GM23248 (cell line): ENCODE measurements at regions of chr2 and their contacts with region 1.

Region 1: DNA sequence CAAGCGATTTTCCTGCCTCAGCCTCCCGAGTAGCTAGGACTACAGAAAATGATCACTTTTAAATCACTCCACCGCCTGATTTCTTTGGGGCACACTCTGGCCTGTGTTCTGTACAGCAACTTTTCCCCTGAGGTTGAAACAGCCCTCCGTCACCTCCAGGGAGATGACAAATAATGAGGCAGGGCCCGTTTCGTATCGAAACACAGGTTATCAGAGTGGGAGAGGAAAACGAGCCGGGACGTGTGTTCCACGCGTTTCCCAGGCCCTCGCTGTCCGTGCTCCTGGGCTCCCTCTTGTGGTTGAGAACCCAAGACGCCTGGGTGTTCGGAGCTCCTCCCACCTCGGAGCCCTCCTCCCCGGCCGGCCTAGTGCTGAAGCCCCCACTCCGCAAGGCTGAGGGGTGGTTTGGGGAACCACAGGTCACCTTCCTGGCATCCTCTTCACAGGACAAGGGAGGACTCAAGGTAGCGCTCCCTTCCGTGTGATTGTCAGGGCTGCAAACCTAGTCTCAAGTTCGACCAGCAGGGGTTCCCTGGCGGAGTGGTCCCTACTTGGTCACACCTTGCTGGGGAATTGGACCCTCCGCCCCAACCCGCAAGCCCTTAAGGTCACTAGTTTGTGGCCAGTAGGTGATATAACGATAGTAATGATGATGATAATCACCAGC is 12.8 kb downstream of the ATP6V1B1 start:
- DNase-seq: peak; percentile 86
- H3K4me3 ChIP-seq: peak overlapping the region; percentile 64
- H3K27ac ChIP-seq: no peak overlapping the region
- H3K4me1 ChIP-seq: peaks cover 4% of the 10 kb centered on the region; the same call in 1 of the 2 replicates
- H3K27me3 ChIP-seq: 0 out of 2 replicates have a peak, but pooled peaks cover 10% of the 10 kb centered on the region

Region 2: DNA sequence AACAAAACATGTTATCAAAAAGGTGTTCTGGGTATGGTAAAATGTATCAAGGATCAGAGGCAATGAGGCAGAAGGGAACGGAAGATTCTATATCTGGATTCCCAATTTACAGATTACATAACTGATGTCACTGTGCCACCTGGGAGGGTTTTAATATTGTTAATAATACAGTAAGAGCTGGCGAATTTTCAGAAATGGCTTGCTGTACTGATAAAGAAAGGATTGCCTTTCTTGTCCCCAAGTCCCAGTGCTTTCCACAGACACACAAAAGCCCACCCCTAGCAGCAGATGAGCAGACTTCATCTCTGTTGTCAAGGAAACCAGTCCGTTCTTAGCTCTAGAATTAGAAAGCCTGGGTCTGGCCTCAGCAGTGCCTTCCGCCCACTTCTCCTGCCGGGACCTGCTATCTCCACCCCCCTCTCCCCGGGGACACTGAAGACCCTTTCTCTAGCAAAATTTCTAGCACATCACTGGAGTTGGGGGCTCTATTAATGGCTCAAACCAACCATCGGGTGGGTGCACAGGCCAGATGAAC is 214.8 kb before region 1 on chr2:
- in situ Hi-C with region 1: no loop called
- DNase-seq: no peak
- H3K4me3 ChIP-seq: no peak overlapping the region
- H3K27ac ChIP-seq: no peak overlapping the region
- H3K4me1 ChIP-seq: no peaks in the 10 kb centered on the region
- H3K27me3 ChIP-seq: peaks cover 30% of the 10 kb centered on the region; the same call in 1 of the 2 replicates

Region 3: DNA sequence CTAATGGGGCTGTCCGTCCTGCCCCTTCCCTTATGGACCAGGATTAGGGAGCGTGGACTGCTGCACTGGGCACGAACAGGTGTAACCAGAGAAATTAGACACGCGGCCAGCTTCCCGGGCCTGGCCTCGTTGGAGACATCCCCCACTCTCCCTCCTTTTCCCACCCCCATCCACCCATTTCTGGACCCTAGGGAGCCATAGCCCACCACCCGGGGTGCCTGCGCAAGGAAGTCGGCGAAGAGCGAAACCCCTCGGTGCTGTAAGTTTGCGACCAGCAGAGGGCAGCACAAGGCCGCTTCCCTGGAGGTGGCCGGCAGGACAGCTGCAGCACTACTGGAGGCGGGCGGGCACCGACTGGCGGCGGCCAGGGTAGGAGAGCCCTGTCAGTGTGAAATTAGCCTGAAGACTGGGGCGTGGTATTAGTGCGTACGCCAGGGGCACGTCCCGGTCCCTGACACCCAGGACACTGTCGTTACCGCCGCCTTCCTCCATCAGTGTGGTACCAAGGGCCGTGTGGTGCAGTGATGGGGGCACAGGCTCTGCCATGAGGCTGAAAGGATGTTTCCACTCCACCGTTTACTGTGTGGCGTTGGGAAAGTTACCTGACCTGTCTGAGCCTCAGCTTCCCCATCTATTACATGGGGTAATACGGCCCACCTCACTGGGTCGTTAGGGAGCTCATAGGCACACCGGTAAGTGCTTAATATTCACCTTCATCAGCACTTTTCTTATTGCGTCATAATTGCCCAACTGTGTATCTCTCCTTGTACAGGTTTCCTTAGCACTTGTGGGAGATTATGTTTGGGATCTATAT is 76.9 kb before region 1 on chr2:
- in situ Hi-C with region 1: loop called (anchors 10 kb)
- DNase-seq: peak; percentile 87
- H3K4me3 ChIP-seq: 0 out of 2 replicates have a peak overlapping the region, but pooled peaks have one; percentile 29
- H3K27ac ChIP-seq: no peak overlapping the region
- H3K4me1 ChIP-seq: no peaks in the 10 kb centered on the region
- H3K27me3 ChIP-seq: peaks cover 48% of the 10 kb centered on the region